ENCODE measurements at regions of chr5 and their contacts with region 1.

Region 1: GRCh38 chr5:75681125-75681830 is 36.0 kb downstream of the POC5 start:
- DNase-seq: peak in 1 of 2 donors; percentile 63
- ATAC-seq: peak; percentile 49 to 72 (median 54)
- H3K4me3 ChIP-seq: no peak overlapping the region
- H3K4me3 Mint-ChIP-seq: no peak overlapping the region
- H3K27ac ChIP-seq: no peak overlapping the region
- H3K27ac Mint-ChIP-seq: no peak overlapping the region
- H3K4me1 ChIP-seq: no peaks in the 10 kb centered on the region
- H3K4me1 Mint-ChIP-seq: peaks cover 10 to 15% of the 10 kb centered on the region in 2 donors
- H3K27me3 ChIP-seq: no peaks in the 10 kb centered on the region
- H3K27me3 Mint-ChIP-seq: no peaks in the 10 kb centered on the region
- CTCF ChIP-seq: peak; percentile 82

Region 2: GRCh38 chr5:75236322-75237316 is 444.7 kb before region 1 on chr5 and contains the start of gene ANKRD31:
- intact Hi-C with region 1: loop called (anchors 2 kb)
- DNase-seq: peak; percentile 92 to 96
- ATAC-seq: peak; percentile 98 to 100 (median 100)
- H3K4me3 ChIP-seq: peak within 1 kb of the TSS; percentile 64
- H3K4me3 Mint-ChIP-seq: peak within 1 kb of the TSS; percentile 89
- H3K27ac ChIP-seq: peak within 1 kb of the TSS; percentile 69
- H3K27ac Mint-ChIP-seq: peak within 1 kb of the TSS; percentile 79 to 90
- H3K4me1 ChIP-seq: peaks cover 9% of the 10 kb centered on the region
- H3K4me1 Mint-ChIP-seq: peaks cover 0 to 5% of the 10 kb centered on the region in 2 donors
- H3K27me3 ChIP-seq: peaks cover 4% of the 10 kb centered on the region
- H3K27me3 Mint-ChIP-seq: peaks cover 0 to 4% of the 10 kb centered on the region in 2 donors
- CTCF ChIP-seq: peak; percentile 94
- total RNA-seq, gene ANKRD31: 0.09 to 0.15 (median 0.12) TPM

Region 3: GRCh38 chr5:75482482-75482881 is 198.8 kb before region 1 on chr5:
- intact Hi-C with region 1: no loop called
- DNase-seq: no peak
- ATAC-seq: no peak
- H3K4me3 ChIP-seq: no peak overlapping the region
- H3K4me3 Mint-ChIP-seq: no peak overlapping the region
- H3K27ac ChIP-seq: no peak overlapping the region
- H3K27ac Mint-ChIP-seq: no peak overlapping the region
- H3K4me1 ChIP-seq: no peaks in the 10 kb centered on the region
- H3K4me1 Mint-ChIP-seq: peaks cover 47 to 57% of the 10 kb centered on the region in 2 donors
- H3K27me3 ChIP-seq: no peaks in the 10 kb centered on the region
- H3K27me3 Mint-ChIP-seq: no peaks in the 10 kb centered on the region
- CTCF ChIP-seq: no peak

Region 4: DNA sequence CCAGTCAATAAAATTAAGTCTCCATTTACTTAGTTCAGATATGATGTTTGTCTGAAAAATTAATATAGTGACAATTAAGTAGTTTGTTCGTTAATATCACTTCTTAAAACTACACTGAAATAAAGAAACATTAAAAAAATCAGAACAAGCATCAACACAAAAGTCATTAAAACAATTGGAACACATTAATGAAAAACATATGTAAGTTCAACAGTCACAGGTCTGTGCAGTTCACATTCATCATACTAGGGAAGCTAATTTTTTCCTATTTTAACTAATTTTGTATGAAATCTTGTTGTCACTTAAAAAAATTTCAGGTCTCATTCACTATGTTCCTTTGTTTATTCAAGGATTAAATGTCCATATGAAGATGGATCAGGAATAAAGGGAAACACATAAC is 13.5 kb after region 1 on chr5:
- intact Hi-C with region 1: no loop called
- DNase-seq: no peak
- ATAC-seq: no peak
- H3K4me3 ChIP-seq: no peak overlapping the region
- H3K4me3 Mint-ChIP-seq: no peak overlapping the region
- H3K27ac ChIP-seq: no peak overlapping the region
- H3K27ac Mint-ChIP-seq: peak overlapping the region in 1 of 2 donors; percentile 59
- H3K4me1 ChIP-seq: no peaks in the 10 kb centered on the region
- H3K4me1 Mint-ChIP-seq: peaks cover 13 to 16% of the 10 kb centered on the region in 2 donors
- H3K27me3 ChIP-seq: no peaks in the 10 kb centered on the region
- H3K27me3 Mint-ChIP-seq: no peaks in the 10 kb centered on the region
- CTCF ChIP-seq: no peak

Measured in natural killer cell (primary cell).